Calu3 (cell line): ENCODE measurements at regions of chr1 and their contacts with region 1.

Region 1: DNA sequence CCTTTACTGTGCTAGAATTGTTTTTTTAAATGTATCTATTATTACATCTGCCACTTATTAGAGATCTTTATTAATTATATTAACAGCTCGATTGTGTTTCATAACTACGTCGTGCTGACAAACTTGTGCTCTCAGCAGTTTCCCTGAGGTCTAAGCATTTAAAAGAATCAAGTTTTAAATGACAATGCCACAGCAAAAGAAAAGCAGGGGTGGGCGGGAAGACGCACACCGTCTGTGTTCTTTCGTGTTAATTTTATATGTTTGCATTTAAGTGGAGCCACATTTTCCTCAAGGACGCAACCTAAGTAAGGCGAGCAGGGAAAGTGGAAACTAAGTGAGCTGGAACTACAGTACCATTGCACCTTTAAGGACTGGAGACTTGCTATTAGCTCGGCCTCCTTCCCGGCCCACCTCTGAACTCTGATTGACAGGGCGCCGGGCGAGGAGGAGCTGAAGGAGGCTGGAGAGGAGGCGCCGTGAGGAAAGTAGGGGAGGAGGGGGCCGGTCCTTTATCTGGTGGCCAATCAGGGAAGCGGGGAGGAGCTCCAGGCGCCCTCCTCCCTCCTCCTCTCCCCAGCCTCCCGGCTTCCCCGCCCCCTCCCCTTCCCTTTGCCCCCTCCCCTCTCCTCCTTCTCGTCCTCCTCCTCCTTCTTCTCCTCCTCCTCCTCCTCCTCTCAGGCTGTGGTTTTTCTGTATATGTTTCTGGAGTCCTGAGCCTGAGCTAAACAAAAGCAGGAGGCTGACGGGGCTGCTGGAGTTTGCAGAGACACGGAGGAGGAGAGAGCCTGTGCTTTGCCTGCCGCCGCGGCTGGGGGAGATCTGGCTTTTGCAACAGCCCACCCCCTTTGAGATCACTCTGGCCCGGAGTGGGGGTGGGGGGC is at the start of gene PBX1:
- DNase-seq: peak; percentile 98
- H3K4me3 Mint-ChIP-seq: peak within 1 kb of the TSS; percentile 73
- H3K27ac Mint-ChIP-seq: peak within 1 kb of the TSS; percentile 75
- H3K4me1 Mint-ChIP-seq: peaks cover 19% of the 10 kb centered on the region
- H3K27me3 Mint-ChIP-seq: no peaks in the 10 kb centered on the region
- CTCF ChIP-seq: no peak
- total RNA-seq, gene PBX1: 21.8 and 22.5 TPM in 2 replicates

Region 2: DNA sequence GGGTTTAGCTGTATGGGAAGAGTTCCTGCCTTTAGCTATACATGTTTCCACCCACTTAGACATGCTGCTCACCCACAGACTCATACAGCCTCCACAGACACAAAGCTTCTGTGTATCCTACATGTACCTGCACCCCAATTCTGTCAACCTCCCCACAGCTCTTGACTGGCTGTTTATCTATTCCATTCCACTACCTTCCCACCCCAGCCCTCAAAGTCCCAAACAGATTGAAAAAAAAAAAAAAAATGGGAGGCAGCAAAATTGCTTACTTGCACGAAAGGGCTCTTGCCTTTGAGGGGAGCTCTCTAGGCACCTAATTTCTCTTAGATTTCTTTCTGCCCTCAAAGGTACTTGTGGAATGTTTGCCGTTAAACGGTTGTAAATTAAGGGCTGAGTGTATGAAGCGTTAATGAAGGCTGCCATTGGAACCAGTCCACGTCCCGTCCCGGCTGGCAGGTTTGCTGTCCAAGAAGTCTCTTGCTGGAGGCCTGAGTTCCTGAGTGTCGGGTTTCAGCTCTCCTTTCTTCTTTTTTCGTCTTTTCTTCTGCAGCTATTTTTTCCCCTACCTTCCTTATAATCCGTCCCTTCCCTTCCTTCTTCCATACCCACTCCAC is 43.9 kb after region 1 on chr1:
- CTCF ChIA-PET with region 1: interaction called, 14 read pairs
- intact Hi-C with region 1: loop called (anchors 1 kb)
- DNase-seq: peak; percentile 41
- H3K4me3 Mint-ChIP-seq: peak overlapping the region; percentile 44
- H3K27ac Mint-ChIP-seq: peak overlapping the region; percentile 76
- H3K4me1 Mint-ChIP-seq: peaks cover 37% of the 10 kb centered on the region
- H3K27me3 Mint-ChIP-seq: no peaks in the 10 kb centered on the region
- CTCF ChIP-seq: no peak

Region 3: GRCh38 chr1:164611754-164612642 is 53.3 kb after region 1 on chr1:
- CTCF ChIA-PET with region 1: interaction called, 3 read pairs
- intact Hi-C with region 1: loop called (anchors 2 kb)
- DNase-seq: peak; percentile 88
- H3K4me3 Mint-ChIP-seq: peak overlapping the region; percentile 48
- H3K27ac Mint-ChIP-seq: peak overlapping the region; percentile 31
- H3K4me1 Mint-ChIP-seq: peaks cover 49% of the 10 kb centered on the region
- H3K27me3 Mint-ChIP-seq: no peaks in the 10 kb centered on the region
- CTCF ChIP-seq: no peak

Region 4: GRCh38 chr1:164660412-164660772 is 101.7 kb after region 1 on chr1:
- CTCF ChIA-PET with region 1: interaction called, 3 read pairs
- intact Hi-C with region 1: loop called (anchors 5 kb)
- DNase-seq: peak; percentile 49
- H3K4me3 Mint-ChIP-seq: peak overlapping the region; percentile 50
- H3K27ac Mint-ChIP-seq: peak overlapping the region; percentile 88
- H3K4me1 Mint-ChIP-seq: peaks cover 64% of the 10 kb centered on the region
- H3K27me3 Mint-ChIP-seq: no peaks in the 10 kb centered on the region
- CTCF ChIP-seq: no peak

Region 5: GRCh38 chr1:164772635-164773034 is 213.9 kb after region 1 on chr1:
- CTCF ChIA-PET with region 1: interaction called, 3 read pairs
- intact Hi-C with region 1: loop called (anchors 5 kb)
- DNase-seq: peak; percentile 74
- H3K4me3 Mint-ChIP-seq: no peak overlapping the region
- H3K27ac Mint-ChIP-seq: peak overlapping the region; percentile 26
- H3K4me1 Mint-ChIP-seq: peaks cover 90% of the 10 kb centered on the region
- H3K27me3 Mint-ChIP-seq: no peaks in the 10 kb centered on the region
- CTCF ChIP-seq: no peak